ENCODE measurements at regions of chr7 and their contacts with region 1.

Region 1: DNA sequence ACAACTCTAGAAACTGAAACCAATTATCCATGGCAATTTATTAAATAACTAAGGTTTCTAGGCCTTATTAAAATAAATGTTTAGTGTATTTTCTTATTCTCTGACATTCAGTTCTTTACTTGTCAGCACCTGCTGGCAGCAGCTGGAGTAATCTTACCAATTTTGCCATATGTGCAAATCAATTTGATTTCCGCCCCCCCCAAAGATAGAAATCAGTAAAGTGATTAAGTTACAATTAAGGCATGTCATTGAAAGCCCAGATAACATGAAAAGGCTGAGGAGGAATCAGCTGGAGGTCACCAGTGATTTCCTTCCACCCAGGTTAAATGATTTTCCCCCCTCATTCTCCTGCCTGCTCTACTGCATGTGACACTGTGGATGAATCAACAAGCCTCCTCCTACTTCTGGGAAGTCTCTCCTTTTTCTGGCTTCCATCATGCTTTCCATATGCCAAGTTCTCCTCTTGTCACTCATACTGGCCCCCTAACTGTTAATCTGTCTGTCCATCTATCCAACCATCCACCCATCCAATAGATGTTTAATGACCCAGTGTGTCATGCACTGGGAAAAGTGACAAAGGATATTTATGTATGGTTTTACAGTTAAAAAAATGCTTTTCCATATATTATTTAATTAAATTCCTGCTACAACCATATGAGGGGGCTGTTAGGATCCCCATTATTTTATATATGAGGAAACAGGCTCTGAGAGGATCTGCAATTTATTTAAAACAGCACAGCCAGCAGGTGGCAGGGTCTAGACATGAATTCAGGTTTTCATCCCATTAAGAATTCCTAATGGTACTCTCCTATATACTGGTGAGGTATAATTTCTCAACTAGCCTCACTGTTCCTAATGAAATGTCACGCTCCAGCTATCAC is 116.5 kb downstream of the ATXN7L1 start:
- DNase-seq: peak; percentile 71
- ATAC-seq: peak; percentile 76
- H3K4me3 ChIP-seq: no peak overlapping the region
- H3K27ac ChIP-seq: peak overlapping the region; percentile 77; the same call in 1 of the 2 replicates
- H3K4me1 ChIP-seq: peaks cover 14% of the 10 kb centered on the region
- H3K27me3 ChIP-seq: no peaks in the 10 kb centered on the region
- CTCF ChIP-seq: peak; percentile 74
- POLR2A ChIP-seq: no peak
- RAD21 ChIP-seq: peak; percentile 81

Region 2: GRCh38 chr7:105325216-105325904 is 434.6 kb before region 1 on chr7:
- CTCF ChIA-PET with region 1: no interaction called
- POLR2A ChIA-PET with region 1: no interaction called
- dilution Hi-C with region 1: no loop called
- in situ Hi-C with region 1: no loop called
- intact Hi-C with region 1: no loop called
- DNase-seq: no peak
- ATAC-seq: no peak
- H3K4me3 ChIP-seq: no peak overlapping the region
- H3K27ac ChIP-seq: no peak overlapping the region
- H3K4me1 ChIP-seq: no peaks in the 10 kb centered on the region
- H3K27me3 ChIP-seq: no peaks in the 10 kb centered on the region
- CTCF ChIP-seq: no peak
- POLR2A ChIP-seq: no peak
- RAD21 ChIP-seq: no peak

Region 3: GRCh38 chr7:105652359-105652993 is 107.4 kb before region 1 on chr7:
- CTCF ChIA-PET with region 1: interaction called, 4 read pairs
- POLR2A ChIA-PET with region 1: no interaction called
- dilution Hi-C with region 1: no loop called
- in situ Hi-C with region 1: no loop called
- intact Hi-C with region 1: loop called (anchors 2 kb)
- DNase-seq: peak; percentile 71
- ATAC-seq: peak; percentile 94
- H3K4me3 ChIP-seq: no peak overlapping the region
- H3K27ac ChIP-seq: no peak overlapping the region
- H3K4me1 ChIP-seq: peaks cover 10% of the 10 kb centered on the region; the same call in 1 of the 2 replicates
- H3K27me3 ChIP-seq: no peaks in the 10 kb centered on the region
- CTCF ChIP-seq: peak; percentile 85
- POLR2A ChIP-seq: no peak
- RAD21 ChIP-seq: peak; percentile 94

Region 4: GRCh38 chr7:105675934-105676371 is 84.0 kb before region 1 on chr7:
- CTCF ChIA-PET with region 1: no interaction called
- POLR2A ChIA-PET with region 1: no interaction called
- dilution Hi-C with region 1: no loop called
- in situ Hi-C with region 1: no loop called
- intact Hi-C with region 1: no loop called
- DNase-seq: no peak
- ATAC-seq: no peak
- H3K4me3 ChIP-seq: no peak overlapping the region
- H3K27ac ChIP-seq: no peak overlapping the region
- H3K4me1 ChIP-seq: peaks cover 4% of the 10 kb centered on the region; the same call in 1 of the 2 replicates
- H3K27me3 ChIP-seq: no peaks in the 10 kb centered on the region
- CTCF ChIP-seq: no peak
- POLR2A ChIP-seq: no peak
- RAD21 ChIP-seq: no peak

Region 5: GRCh38 chr7:105876091-105876963 is 116.4 kb after region 1 on chr7 and contains the start of gene ATXN7L1:
- CTCF ChIA-PET with region 1: no interaction called
- POLR2A ChIA-PET with region 1: no interaction called
- dilution Hi-C with region 1: no loop called
- in situ Hi-C with region 1: loop called (anchors 10 kb)
- intact Hi-C with region 1: loop called (anchors 1 kb)
- DNase-seq: peak; percentile 98
- ATAC-seq: peak; percentile 97
- H3K4me3 ChIP-seq: peak within 1 kb of the TSS; percentile 82
- H3K27ac ChIP-seq: peak within 1 kb of the TSS; percentile 91
- H3K4me1 ChIP-seq: peaks cover 9% of the 10 kb centered on the region; the same call in 1 of the 2 replicates
- H3K27me3 ChIP-seq: no peaks in the 10 kb centered on the region
- CTCF ChIP-seq: peak; percentile 72
- POLR2A ChIP-seq: peak; percentile 87
- RAD21 ChIP-seq: peak; percentile 49
- total RNA-seq, gene ATXN7L1: 4.3 and 4.7 TPM in 2 replicates

Region 6: GRCh38 chr7:105934572-105935185 is 174.8 kb after region 1 on chr7:
- CTCF ChIA-PET with region 1: interaction called, 3 read pairs
- POLR2A ChIA-PET with region 1: no interaction called
- dilution Hi-C with region 1: no loop called
- in situ Hi-C with region 1: no loop called
- intact Hi-C with region 1: loop called (anchors 5 kb)
- DNase-seq: peak; percentile 47
- ATAC-seq: peak; percentile 71
- H3K4me3 ChIP-seq: no peak overlapping the region
- H3K27ac ChIP-seq: no peak overlapping the region
- H3K4me1 ChIP-seq: peaks cover 6% of the 10 kb centered on the region; the same call in 1 of the 2 replicates
- H3K27me3 ChIP-seq: peaks cover 4% of the 10 kb centered on the region
- CTCF ChIP-seq: peak; percentile 48
- POLR2A ChIP-seq: no peak
- RAD21 ChIP-seq: peak; percentile 36; the same call in 1 of the 2 replicates

Region 7: DNA sequence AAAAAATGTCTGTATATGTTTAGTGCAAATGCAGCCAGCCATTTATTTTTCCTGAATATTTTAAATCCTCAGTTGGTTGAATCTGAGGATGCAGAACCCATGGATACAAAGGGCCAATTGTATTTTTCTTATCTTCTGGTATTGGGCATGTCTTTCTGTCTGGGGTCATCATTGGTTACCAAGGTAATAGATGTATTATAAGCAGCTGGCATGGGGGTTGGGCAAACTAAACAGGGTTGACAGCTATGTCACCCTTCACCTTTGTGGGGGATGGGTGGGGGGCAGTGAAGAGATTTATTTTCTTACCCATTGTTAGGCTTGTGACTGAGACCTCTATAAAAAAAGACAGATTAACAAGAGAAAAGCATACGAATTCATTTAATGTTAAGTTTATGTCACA is 242.0 kb after region 1 on chr7:
- CTCF ChIA-PET with region 1: no interaction called
- POLR2A ChIA-PET with region 1: no interaction called
- dilution Hi-C with region 1: no loop called
- in situ Hi-C with region 1: no loop called
- intact Hi-C with region 1: loop called (anchors 1 kb)
- DNase-seq: no peak
- ATAC-seq: no peak
- H3K4me3 ChIP-seq: no peak overlapping the region
- H3K27ac ChIP-seq: no peak overlapping the region
- H3K4me1 ChIP-seq: no peaks in the 10 kb centered on the region
- H3K27me3 ChIP-seq: peaks cover 33% of the 10 kb centered on the region
- CTCF ChIP-seq: no peak
- POLR2A ChIP-seq: no peak
- RAD21 ChIP-seq: no peak

Region 8: DNA sequence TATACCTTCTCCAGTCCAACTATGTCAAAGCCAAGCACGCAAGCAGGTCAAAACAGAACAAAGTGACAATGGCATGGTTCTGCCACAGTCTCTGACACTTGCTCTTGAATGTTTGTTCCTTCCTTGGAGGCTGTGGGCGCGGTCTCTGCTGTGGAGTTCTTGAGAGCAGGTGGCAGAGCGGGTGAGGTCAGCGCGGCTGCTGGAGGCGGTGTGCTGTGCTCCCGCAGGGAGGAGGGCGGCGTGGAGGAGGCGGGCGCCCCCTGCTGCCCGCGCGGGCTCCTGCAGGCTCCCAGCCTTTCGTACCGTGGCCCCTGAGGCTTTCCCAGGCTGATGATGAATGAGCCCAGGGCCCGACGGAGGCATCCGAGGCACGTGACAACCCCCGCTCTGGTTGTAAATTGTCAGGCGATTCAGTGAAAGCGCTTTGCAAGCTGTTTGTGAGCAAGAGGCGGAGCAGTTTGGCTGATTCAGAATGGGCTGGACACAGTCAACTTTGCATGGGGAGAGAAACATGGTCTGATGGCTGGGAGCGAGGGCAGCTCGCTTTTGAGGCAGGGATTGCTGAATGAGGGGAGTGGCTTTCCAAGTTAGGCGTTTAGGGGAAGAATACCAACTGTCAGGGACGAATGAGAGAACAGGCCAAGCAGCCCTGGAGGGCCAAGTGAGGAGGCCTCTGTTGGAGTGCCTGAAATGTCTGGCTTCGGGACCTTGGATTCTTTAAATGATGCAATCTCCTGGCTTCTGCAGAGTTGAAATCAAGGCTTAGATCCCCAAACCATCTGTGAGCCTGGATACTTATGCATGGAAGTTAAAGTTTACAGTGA is 249.7 kb after region 1 on chr7:
- CTCF ChIA-PET with region 1: interaction called, 5 read pairs
- POLR2A ChIA-PET with region 1: no interaction called
- dilution Hi-C with region 1: no loop called
- in situ Hi-C with region 1: loop called (anchors 5 kb)
- intact Hi-C with region 1: loop called (anchors 1 kb)
- DNase-seq: peak; percentile 98
- ATAC-seq: peak; percentile 84
- H3K4me3 ChIP-seq: no peak overlapping the region
- H3K27ac ChIP-seq: peak overlapping the region; percentile 95
- H3K4me1 ChIP-seq: peaks cover 26% of the 10 kb centered on the region
- H3K27me3 ChIP-seq: no peaks in the 10 kb centered on the region
- CTCF ChIP-seq: peak; percentile 98
- POLR2A ChIP-seq: no peak
- RAD21 ChIP-seq: peak; percentile 87

Region 9: DNA sequence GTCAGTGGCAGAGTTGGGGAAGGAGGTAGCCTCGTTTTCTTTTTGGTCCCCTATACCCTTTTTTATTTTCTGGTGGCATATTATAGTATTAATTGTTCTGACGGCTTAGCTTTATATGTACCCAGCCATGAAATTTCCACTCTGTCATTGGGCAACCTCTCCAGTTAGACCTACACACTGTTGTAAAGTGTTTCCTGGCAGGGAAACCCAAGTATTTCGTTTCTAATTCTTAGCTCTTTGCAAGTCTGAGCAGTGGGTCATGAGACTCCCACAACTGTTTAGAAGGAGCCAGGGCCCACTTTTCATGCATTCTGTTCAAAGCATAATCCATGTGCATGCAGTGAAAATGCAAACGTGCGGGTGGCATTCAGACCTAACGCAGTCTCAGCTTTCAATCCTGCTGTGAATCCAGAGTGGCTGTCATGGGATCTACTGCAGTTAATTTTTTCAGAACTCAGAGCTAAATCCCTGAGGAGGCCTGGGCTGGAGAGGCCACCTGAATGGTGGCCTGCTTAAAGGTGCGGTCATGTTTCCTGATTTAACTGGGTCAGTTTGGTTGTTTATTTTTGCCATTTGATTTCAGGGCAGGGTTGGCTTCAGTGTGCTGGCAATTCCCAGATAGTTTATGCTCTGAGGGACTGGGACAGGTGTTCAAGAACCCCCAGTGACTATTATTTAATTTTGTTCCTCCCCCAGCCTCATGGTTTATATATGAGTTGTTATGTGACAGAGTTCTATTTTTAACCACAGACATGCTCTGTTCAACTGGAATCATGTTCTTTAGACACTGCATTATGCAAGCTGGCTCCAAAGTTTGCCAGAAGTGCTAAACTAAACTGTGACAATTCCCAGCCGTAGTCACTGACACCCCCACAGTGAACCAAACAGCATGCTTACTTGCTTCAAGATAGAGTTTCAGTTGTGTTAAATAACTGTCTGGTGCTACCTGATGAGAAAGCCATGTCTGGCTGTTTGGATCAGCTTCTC is 379.6 kb after region 1 on chr7:
- CTCF ChIA-PET with region 1: no interaction called
- POLR2A ChIA-PET with region 1: no interaction called
- dilution Hi-C with region 1: no loop called
- in situ Hi-C with region 1: loop called (anchors 10 kb)
- intact Hi-C with region 1: no loop called
- DNase-seq: peak; percentile 52
- ATAC-seq: peak; percentile 53; the same call in 1 of the 2 replicates
- H3K4me3 ChIP-seq: no peak overlapping the region
- H3K27ac ChIP-seq: no peak overlapping the region
- H3K4me1 ChIP-seq: peaks cover 3% of the 10 kb centered on the region; the same call in 1 of the 2 replicates
- H3K27me3 ChIP-seq: peaks cover 30% of the 10 kb centered on the region
- CTCF ChIP-seq: no peak
- POLR2A ChIP-seq: no peak
- RAD21 ChIP-seq: no peak